Activated B cell treated with CpG ODN at 0.5 μM for 24 hours (primary cell): ENCODE measurements at regions of chr7 and their contacts with region 1.

Region 1: DNA sequence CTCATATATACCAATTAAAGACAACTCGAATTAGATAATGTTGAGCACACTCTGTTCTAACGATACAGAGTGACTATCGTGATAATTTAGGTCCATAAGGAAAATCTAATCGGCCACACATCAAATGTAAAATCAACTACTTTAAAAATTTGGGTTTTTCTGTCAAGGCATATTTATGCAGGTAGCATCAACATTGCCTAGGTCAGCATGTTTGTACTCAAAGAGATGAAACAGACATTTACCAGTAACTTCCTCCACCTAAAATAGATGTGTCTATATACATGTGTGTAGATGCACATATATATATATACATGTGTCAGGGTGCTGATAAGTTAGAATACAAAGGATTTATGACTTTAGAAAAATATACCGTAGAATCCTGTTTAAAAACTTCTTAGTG is 22.0 kb downstream of the PSMC2 start:
- DNase-seq: no peak
- ATAC-seq: no peak
- H3K4me3 Mint-ChIP-seq: no peak overlapping the region
- H3K27ac Mint-ChIP-seq: no peak overlapping the region
- H3K4me1 Mint-ChIP-seq: no peaks in the 10 kb centered on the region
- H3K27me3 Mint-ChIP-seq: no peaks in the 10 kb centered on the region
- CTCF ChIP-seq: no peak

Region 2: DNA sequence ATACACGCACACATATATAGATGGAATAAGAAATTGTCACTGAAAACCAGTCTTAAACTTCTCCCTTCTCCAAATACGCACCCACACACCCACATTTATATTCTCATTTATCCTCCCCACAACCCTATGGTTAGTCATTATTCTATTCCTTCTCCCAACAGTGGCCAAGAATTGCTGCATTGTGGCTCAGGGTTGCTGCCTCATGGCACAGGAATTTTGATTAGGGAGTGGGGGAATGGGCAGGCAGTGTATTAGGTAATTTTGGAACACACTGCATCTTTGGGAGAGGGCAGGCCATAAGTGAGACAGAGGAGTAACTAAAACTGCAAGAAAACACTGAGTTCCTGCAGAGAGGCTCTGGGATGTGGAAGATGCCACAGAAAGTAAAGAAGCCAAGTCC is 256.3 kb before region 1 on chr7:
- CTCF ChIA-PET with region 1: no interaction called
- POLR2A ChIA-PET with region 1: no interaction called
- intact Hi-C with region 1: no loop called
- DNase-seq: no peak
- ATAC-seq: no peak
- H3K4me3 Mint-ChIP-seq: no peak overlapping the region
- H3K27ac Mint-ChIP-seq: no peak overlapping the region
- H3K4me1 Mint-ChIP-seq: peaks cover 3% of the 10 kb centered on the region
- H3K27me3 Mint-ChIP-seq: no peaks in the 10 kb centered on the region
- CTCF ChIP-seq: no peak

Region 3: GRCh38 chr7:103317016-103317415 is 52.4 kb before region 1 on chr7:
- CTCF ChIA-PET with region 1: no interaction called
- POLR2A ChIA-PET with region 1: no interaction called
- intact Hi-C with region 1: loop called (anchors 10 kb)
- DNase-seq: no peak
- ATAC-seq: no peak
- H3K4me3 Mint-ChIP-seq: no peak overlapping the region
- H3K27ac Mint-ChIP-seq: peak overlapping the region; percentile 62
- H3K4me1 Mint-ChIP-seq: peaks cover 7% of the 10 kb centered on the region
- H3K27me3 Mint-ChIP-seq: no peaks in the 10 kb centered on the region
- CTCF ChIP-seq: no peak